K562 (cell line): ENCODE measurements at regions of chr20 and their contacts with region 1.

Region 1: GRCh38 chr20:4108495-4109306 is 93.3 kb upstream of the RNF24 start:
- DNase-seq: peak; percentile 65 to 82 (median 70)
- ATAC-seq: peak; percentile 86
- H3K4me3 ChIP-seq: no peak overlapping the region
- H3K27ac ChIP-seq: peak overlapping the region; percentile 13; the same call in 1 of the 3 replicates
- H3K4me1 ChIP-seq: peaks cover 0 to 12% of the 10 kb centered on the region in 2 experiments; a peak in 4 of 5 replicates
- H3K27me3 ChIP-seq: no peaks in the 10 kb centered on the region
- CTCF ChIP-seq: peak; percentile 92 to 95 (median 94)
- EP300 ChIP-seq: peak; percentile 50; the same call in 1 of the 2 replicates
- POLR2A ChIP-seq: no peak
- RAD21 ChIP-seq: peak; percentile 99

Region 2: DNA sequence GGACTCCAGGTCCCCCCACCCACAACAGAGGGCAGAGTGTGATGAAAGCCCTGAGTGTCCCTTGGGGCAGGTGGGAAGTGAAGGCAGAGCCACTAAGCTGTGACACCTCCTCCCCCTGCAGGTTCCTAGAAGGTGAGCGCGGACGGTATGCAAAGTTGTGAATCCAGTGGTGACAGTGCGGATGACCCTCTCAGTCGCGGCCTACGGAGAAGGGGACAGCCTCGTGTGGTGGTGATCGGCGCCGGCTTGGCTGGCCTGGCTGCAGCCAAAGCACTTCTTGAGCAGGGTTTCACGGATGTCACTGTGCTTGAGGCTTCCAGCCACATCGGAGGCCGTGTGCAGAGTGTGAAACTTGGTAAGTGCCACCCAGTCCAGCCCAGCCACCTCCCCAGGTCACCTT is 66.2 kb after region 1 on chr20:
- CTCF ChIA-PET with region 1: interaction called, 3 read pairs
- POLR2A ChIA-PET with region 1: no interaction called
- in situ Hi-C with region 1: loop called (anchors 5 kb)
- intact Hi-C with region 1: no loop called
- DNase-seq: no peak
- ATAC-seq: no peak; the same call in 2 of the 3 replicates
- H3K4me3 ChIP-seq: no peak overlapping the region
- H3K27ac ChIP-seq: no peak overlapping the region
- H3K4me1 ChIP-seq: peaks cover 12 to 23% of the 10 kb centered on the region in 2 experiments; a peak in 4 of 5 replicates
- H3K27me3 ChIP-seq: no peaks in the 10 kb centered on the region
- CTCF ChIP-seq: no peak
- EP300 ChIP-seq: no peak
- POLR2A ChIP-seq: no peak
- RAD21 ChIP-seq: no peak

Region 3: GRCh38 chr20:4195499-4195898 is 86.8 kb after region 1 on chr20:
- CTCF ChIA-PET with region 1: interaction called, 6 read pairs
- POLR2A ChIA-PET with region 1: no interaction called
- in situ Hi-C with region 1: no loop called
- intact Hi-C with region 1: loop called (anchors 2 kb)
- DNase-seq: peak; percentile 36 to 52 (median 40)
- ATAC-seq: peak; percentile 66
- H3K4me3 ChIP-seq: no peak overlapping the region
- H3K27ac ChIP-seq: no peak overlapping the region
- H3K4me1 ChIP-seq: peaks cover 10 to 35% of the 10 kb centered on the region in 2 experiments
- H3K27me3 ChIP-seq: no peaks in the 10 kb centered on the region
- CTCF ChIP-seq: peak; percentile 64 to 74 (median 72)
- EP300 ChIP-seq: no peak
- POLR2A ChIP-seq: no peak
- RAD21 ChIP-seq: peak; percentile 66 to 82

Region 4: DNA sequence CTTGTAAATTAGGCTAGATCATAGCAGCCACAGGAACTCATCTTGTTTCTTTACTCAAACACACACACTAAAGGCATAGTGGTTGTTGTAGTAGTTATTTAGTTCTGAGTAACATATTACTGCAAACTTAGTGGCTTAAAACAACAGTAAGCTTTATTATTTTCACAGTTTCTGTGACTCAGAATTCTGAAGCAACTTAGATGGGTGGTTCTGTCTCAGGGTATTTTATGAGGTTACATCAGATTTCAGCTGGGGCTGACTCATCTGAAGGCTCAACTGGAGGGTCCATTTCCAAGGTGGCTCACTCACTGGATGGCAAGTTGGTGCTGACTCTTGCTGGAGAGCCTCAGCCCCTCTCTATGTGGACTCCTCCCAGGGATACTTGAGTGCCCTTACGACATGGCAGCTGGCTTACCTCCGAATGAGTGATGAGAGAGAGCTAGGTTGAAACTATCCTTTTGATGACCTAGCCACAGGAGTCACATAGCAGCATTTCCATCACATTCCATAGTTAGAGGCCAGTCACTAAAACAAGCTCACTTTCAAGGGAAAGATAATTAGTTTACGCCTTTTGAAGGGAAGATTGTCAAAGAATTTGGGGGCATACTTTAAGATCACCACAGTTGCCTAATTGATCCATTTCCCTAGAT is 476.5 kb after region 1 on chr20:
- CTCF ChIA-PET with region 1: no interaction called
- POLR2A ChIA-PET with region 1: no interaction called
- in situ Hi-C with region 1: loop called (anchors 5 kb)
- intact Hi-C with region 1: loop called (anchors 5 kb)
- DNase-seq: no peak
- ATAC-seq: peak; percentile 70
- H3K4me3 ChIP-seq: no peak overlapping the region
- H3K27ac ChIP-seq: no peak overlapping the region
- H3K4me1 ChIP-seq: no peaks in the 10 kb centered on the region
- H3K27me3 ChIP-seq: no peaks in the 10 kb centered on the region; a peak in 2 of 5 replicates
- CTCF ChIP-seq: no peak
- EP300 ChIP-seq: peak; percentile 56; the same call in 1 of the 2 replicates
- POLR2A ChIP-seq: no peak
- RAD21 ChIP-seq: no peak

Region 5: DNA sequence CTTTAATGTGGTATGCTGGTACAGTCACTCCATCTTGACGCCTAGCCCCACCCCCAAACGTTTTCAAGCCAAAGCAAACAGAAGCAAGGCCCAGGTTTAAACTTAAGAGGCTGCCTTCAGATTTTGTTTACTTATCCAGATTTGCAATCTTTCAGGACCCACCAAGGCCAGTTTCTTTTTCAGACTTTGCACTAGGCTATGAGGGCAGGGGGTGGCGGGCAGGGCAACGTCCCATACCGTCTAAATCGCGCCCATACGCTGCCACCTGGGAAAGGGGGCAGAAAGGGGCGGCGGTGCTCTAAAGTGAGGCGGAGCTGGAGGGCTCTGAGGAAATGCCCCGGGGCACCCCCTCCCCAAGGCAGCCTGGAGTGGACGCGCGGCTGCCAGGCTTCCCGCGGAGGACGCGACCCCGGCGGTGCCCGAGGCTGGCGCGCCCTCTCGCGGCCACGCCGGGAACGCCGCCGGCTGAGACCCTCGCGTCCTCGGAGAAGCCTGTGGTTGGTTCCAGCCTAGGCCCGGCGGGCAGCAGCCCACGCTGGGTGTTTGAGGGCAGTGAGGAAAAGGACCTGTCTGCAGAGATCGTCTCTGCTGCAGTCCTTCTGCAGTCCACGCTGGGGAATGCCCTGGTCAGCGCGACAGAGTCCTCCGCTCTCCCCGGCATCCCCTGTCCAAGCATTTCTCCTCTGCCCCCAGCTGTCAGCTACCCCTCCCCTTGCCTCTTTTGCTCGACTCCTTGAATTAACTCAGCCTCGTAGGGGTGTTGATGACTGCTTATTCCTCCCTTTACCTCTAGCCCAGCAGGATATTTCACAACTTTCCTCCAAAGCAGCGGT is 483.8 kb after region 1 on chr20:
- CTCF ChIA-PET with region 1: interaction called, 3 read pairs
- POLR2A ChIA-PET with region 1: no interaction called
- in situ Hi-C with region 1: loop called (anchors 5 kb)
- intact Hi-C with region 1: loop called (anchors 5 kb)
- DNase-seq: peak; percentile 38 to 72 (median 68)
- ATAC-seq: peak; percentile 98
- H3K4me3 ChIP-seq: no peak overlapping the region
- H3K27ac ChIP-seq: no peak overlapping the region
- H3K4me1 ChIP-seq: peaks cover 0 to 6% of the 10 kb centered on the region in 2 experiments; a peak in 1 of 5 replicates
- H3K27me3 ChIP-seq: no peaks in the 10 kb centered on the region; a peak in 2 of 5 replicates
- CTCF ChIP-seq: peak; percentile 71 to 80 (median 73)
- EP300 ChIP-seq: no peak
- POLR2A ChIP-seq: no peak
- RAD21 ChIP-seq: peak; percentile 90